Mammary epithelial cell (primary cell): ENCODE measurements at regions of chr2 and their contacts with region 1.

Region 1: GRCh38 chr2:118003396-118003824 is 10.5 kb downstream of the CCDC93 start:
- DNase-seq: peak; percentile 63
- H3K4me3 ChIP-seq: no peak overlapping the region
- H3K27ac ChIP-seq: no peak overlapping the region
- H3K4me1 ChIP-seq: no peaks in the 10 kb centered on the region
- H3K27me3 ChIP-seq: no peaks in the 10 kb centered on the region
- CTCF ChIP-seq: peak; percentile 78 to 82

Region 2: GRCh38 chr2:116988303-116988702 is 1015.1 kb before region 1 on chr2:
- CTCF ChIA-PET with region 1: no interaction called
- dilution Hi-C with region 1: no loop called
- in situ Hi-C with region 1: no loop called
- intact Hi-C with region 1: no loop called
- DNase-seq: peak; percentile 6
- H3K4me3 ChIP-seq: no peak overlapping the region
- H3K27ac ChIP-seq: no peak overlapping the region
- H3K4me1 ChIP-seq: no peaks in the 10 kb centered on the region
- H3K27me3 ChIP-seq: no peaks in the 10 kb centered on the region
- CTCF ChIP-seq: no peak

Region 3: GRCh38 chr2:117814417-117815264 is 188.8 kb before region 1 on chr2 and contains the start of gene DDX18:
- CTCF ChIA-PET with region 1: interaction called, 6 read pairs
- dilution Hi-C with region 1: no loop called
- in situ Hi-C with region 1: loop called in 1 of 2 experiments (anchors 10 kb)
- intact Hi-C with region 1: loop called (anchors 1 kb)
- DNase-seq: peak; percentile 96
- H3K4me3 ChIP-seq: peak within 1 kb of the TSS; percentile 78 to 86 (median 78)
- H3K27ac ChIP-seq: peak within 1 kb of the TSS; percentile 93
- H3K4me1 ChIP-seq: peaks cover 11% of the 10 kb centered on the region
- H3K27me3 ChIP-seq: no peaks in the 10 kb centered on the region
- CTCF ChIP-seq: peak; percentile 100
- total RNA-seq, gene DDX18: 51.3 to 69.7 TPM

Region 4: GRCh38 chr2:117835990-117836760 is 167.2 kb before region 1 on chr2:
- CTCF ChIA-PET with region 1: no interaction called
- dilution Hi-C with region 1: no loop called
- in situ Hi-C with region 1: loop called in 1 of 2 experiments (anchors 10 kb)
- intact Hi-C with region 1: loop called (anchors 1 kb)
- DNase-seq: peak; percentile 39
- H3K4me3 ChIP-seq: peak overlapping the region in 1 of 3 experiments; percentile 20
- H3K27ac ChIP-seq: no peak overlapping the region
- H3K4me1 ChIP-seq: peaks cover 8% of the 10 kb centered on the region
- H3K27me3 ChIP-seq: no peaks in the 10 kb centered on the region
- CTCF ChIP-seq: peak; percentile 68 to 93

Region 5: DNA sequence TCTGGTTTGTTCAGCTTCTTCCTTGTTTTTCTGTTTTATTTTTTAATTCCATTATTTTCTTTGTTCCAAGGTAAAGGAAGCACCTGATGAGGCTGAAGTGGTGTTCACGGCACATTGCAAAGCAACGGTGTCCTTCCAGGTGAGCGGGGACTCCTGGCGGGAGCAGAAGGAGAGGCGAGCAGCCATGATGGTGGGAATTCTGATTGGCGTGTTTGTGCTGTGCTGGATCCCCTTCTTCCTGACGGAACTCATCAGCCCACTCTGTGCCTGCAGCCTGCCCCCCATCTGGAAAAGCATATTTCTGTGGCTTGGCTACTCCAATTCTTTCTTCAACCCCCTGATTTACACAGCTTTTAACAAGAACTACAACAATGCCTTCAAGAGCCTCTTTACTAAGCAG is 100.5 kb before region 1 on chr2:
- CTCF ChIA-PET with region 1: no interaction called
- dilution Hi-C with region 1: no loop called
- in situ Hi-C with region 1: no loop called
- intact Hi-C with region 1: no loop called
- DNase-seq: no peak
- H3K4me3 ChIP-seq: no peak overlapping the region
- H3K27ac ChIP-seq: no peak overlapping the region
- H3K4me1 ChIP-seq: no peaks in the 10 kb centered on the region
- H3K27me3 ChIP-seq: no peaks in the 10 kb centered on the region
- CTCF ChIP-seq: no peak

Region 6: DNA sequence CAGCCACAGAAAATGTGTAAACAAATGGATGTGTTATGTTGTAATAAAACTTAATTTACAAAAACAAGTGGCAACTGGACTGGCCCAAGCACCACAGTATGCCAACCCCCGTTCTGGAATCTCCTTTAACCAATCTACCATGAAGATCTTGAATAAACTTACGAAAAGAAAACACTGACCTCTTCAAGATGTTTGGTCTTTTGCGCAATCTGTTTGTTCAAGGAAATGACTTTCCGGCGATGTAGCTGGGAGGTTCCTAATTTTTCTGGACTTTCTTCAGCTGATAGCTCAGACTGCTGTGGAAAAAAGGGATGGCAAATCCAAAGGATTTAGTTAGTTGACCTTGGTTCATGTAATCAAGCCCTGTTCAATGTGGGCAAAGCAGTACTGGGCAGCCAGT is 45.2 kb before region 1 on chr2:
- CTCF ChIA-PET with region 1: no interaction called
- dilution Hi-C with region 1: no loop called
- in situ Hi-C with region 1: loop called in 1 of 2 experiments (anchors 10 kb)
- intact Hi-C with region 1: loop called (anchors 1 kb)
- DNase-seq: peak; percentile 70
- H3K4me3 ChIP-seq: no peak overlapping the region
- H3K27ac ChIP-seq: no peak overlapping the region
- H3K4me1 ChIP-seq: peaks cover 13% of the 10 kb centered on the region
- H3K27me3 ChIP-seq: no peaks in the 10 kb centered on the region
- CTCF ChIP-seq: no peak

Region 7: DNA sequence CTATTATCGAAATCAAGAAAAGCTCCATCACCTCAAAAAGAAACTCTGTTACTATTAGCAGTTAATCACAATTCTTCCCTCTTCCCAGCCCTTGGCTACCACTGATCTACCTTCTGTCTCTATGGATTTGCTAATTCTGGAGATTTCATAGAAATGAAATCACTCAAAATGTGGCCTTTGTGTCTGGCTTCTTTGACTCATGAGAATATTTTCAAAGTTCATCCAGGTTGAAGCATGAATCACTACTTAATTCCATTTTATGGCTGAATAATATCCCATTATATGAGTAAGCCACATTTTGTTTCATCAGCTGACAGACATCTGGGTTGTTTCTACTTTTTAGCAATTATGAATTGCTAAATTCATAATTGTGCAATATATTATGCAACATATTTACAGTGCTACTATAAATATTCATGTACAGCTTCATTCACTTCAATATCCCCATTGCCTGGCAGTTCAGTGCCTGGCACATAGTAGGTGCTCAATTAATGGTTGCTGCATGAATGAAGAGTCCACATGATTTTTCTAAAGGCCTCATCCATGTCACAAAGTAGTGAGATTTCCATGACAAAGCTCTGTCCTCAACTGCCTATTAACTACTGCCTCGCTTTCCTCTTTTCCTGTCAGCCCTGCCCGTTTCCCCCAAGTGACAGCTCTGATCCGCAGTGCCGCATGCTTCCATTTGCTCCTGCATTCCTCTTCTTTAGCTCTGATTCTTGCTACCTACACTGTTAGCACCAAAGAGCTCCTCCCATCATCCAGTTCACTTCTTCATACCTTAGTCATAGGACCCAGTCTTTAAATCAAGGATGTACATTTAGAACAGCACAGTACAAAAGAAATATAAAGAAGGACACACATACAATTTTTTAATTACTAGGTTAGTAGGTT is 22.4 kb before region 1 on chr2:
- CTCF ChIA-PET with region 1: interaction called, 3 read pairs
- dilution Hi-C with region 1: no loop called
- in situ Hi-C with region 1: no loop called
- intact Hi-C with region 1: loop called (anchors 2 kb)
- DNase-seq: peak; percentile 97
- H3K4me3 ChIP-seq: no peak overlapping the region
- H3K27ac ChIP-seq: peak overlapping the region; percentile 86
- H3K4me1 ChIP-seq: peaks cover 30% of the 10 kb centered on the region
- H3K27me3 ChIP-seq: no peaks in the 10 kb centered on the region
- CTCF ChIP-seq: no peak

Region 8: GRCh38 chr2:118197011-118197675 is 193.7 kb after region 1 on chr2:
- CTCF ChIA-PET with region 1: no interaction called
- dilution Hi-C with region 1: no loop called
- in situ Hi-C with region 1: no loop called
- intact Hi-C with region 1: no loop called
- DNase-seq: no peak
- H3K4me3 ChIP-seq: no peak overlapping the region
- H3K27ac ChIP-seq: no peak overlapping the region
- H3K4me1 ChIP-seq: no peaks in the 10 kb centered on the region
- H3K27me3 ChIP-seq: no peaks in the 10 kb centered on the region
- CTCF ChIP-seq: no peak